ENCODE measurements at regions of chr6 and their contacts with region 1.

Region 1: DNA sequence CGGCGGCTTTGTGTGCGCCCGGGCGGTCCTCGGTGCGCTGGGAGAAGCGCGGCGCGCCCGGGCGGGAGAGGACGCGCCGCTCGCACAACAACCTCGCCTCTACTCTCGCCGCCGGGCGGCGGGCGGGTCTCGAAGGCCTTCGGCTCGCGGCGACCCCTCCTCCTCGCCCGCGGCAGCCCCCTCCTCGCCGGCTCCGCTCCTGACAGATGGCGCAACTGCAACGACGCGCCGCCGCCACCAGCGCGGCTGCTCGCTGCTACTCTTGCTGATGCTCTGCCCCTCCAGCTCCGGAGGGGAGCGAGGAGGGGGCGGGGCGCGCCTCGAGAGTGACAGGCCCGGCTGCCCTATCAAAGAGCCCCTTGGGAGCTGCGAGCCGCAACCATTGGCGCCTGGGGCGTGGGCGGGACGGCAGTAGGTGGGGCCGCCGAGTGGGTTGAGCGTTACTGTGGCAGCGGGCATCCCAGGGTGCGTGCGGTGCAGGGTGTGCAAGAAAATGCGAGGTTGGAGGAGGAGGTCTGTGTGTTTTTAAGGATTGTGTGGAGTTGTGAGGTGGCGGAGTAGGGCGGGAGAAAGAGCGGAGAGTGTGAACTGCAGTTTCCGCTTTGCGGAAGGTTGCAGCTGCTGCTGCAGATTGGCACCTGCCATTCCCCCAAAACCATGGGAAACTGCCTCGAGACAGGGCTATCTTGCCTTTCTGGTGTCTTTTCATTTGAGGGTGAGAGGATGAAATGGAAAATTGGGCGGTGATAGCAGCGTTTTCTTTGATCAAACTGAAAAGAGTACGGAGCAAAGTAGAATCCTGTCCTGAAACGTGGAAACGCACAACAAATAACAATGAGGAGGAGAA is at the start of gene FYN:
- H3K4me3 Mint-ChIP-seq: peak within 1 kb of the TSS; percentile 90
- H3K27ac Mint-ChIP-seq: peak within 1 kb of the TSS; percentile 64
- H3K4me1 Mint-ChIP-seq: peaks cover 35% of the 10 kb centered on the region
- H3K27me3 Mint-ChIP-seq: peaks cover 6% of the 10 kb centered on the region

Region 2: DNA sequence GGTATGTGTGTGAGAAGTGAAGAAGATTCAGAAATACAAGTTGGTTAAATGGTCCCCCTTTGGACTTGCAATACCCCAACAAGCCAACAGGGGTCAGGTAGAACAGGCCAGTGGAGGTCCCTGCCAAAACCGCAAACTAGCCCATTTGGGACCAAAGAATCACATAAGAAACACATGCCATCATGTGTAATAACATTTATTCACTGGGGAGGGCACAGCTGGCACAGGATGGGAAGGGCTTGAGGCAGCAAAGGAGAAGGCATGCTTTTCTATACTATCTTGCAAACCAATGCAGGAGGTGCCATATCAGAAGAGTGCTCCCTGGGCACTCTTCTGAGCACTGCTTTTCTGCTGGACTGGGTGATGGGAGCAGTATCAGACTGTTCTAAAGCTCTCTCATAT is 151.6 kb before region 1 on chr6:
- intact Hi-C with region 1: loop called (anchors 10 kb)
- H3K4me3 Mint-ChIP-seq: no peak overlapping the region
- H3K27ac Mint-ChIP-seq: no peak overlapping the region
- H3K4me1 Mint-ChIP-seq: peaks cover 43% of the 10 kb centered on the region
- H3K27me3 Mint-ChIP-seq: peaks cover 6% of the 10 kb centered on the region

Region 3: DNA sequence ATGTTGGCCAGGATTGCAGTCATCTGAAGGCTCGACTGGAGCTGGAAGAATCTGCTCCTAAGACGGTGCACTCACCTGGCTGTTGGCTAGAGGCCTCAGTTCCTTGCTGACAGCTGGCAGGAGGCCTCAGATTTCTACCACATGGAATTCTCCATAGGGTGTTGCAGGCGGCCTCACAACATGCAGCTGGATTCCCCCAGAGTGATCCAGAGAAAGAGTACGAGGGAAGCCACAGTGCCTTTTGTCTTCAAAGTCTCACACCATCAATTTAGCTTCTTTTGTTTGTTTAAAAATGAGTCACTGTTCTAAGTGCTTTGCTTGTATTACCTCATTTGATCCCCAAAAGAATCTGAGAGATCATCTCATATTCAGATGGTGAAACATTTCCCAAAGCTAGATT is 65.3 kb after region 1 on chr6:
- intact Hi-C with region 1: no loop called
- H3K4me3 Mint-ChIP-seq: no peak overlapping the region
- H3K27ac Mint-ChIP-seq: no peak overlapping the region
- H3K4me1 Mint-ChIP-seq: peaks cover 42% of the 10 kb centered on the region
- H3K27me3 Mint-ChIP-seq: peaks cover 11% of the 10 kb centered on the region

Region 4: DNA sequence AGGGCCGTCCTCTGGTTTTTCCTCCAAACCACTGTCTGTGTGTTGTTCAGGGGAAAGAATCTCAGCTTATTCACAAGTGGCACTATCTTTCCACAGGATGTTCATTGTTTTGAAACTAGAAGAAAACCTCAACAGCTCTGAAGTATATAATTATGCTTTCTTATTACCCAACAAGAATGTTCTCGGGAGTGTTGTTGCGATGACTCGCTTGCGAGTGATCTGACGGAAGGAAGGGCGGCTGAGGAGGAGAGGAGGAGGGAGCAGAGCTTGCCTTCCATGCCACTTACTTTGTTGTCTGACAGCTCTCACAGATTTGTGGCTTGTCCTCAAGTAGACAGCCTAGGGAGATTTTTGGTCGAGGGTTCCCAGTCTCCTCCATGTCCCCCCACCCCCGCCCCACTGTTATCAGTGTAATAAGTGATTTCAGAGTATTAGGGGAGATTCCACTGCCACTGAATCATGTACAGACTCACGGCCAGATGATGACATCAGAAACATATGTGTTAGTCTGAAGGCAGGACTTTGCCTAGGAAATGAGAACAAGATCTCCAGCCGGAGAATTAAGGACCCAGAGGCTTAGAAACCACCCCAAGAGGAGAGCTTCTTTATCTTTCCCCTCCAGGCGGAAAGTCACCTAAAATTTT is 99.8 kb after region 1 on chr6:
- intact Hi-C with region 1: loop called (anchors 5 kb)
- H3K4me3 Mint-ChIP-seq: no peak overlapping the region
- H3K27ac Mint-ChIP-seq: peak overlapping the region; percentile 79
- H3K4me1 Mint-ChIP-seq: peaks cover 59% of the 10 kb centered on the region
- H3K27me3 Mint-ChIP-seq: no peaks in the 10 kb centered on the region

Region 5: GRCh38 chr6:111997078-111997852 is 123.9 kb after region 1 on chr6:
- intact Hi-C with region 1: loop called (anchors 5 kb)
- H3K4me3 Mint-ChIP-seq: no peak overlapping the region
- H3K27ac Mint-ChIP-seq: no peak overlapping the region
- H3K4me1 Mint-ChIP-seq: peaks cover 27% of the 10 kb centered on the region
- H3K27me3 Mint-ChIP-seq: peaks cover 2% of the 10 kb centered on the region